ENCODE measurements at regions of chr10 and their contacts with region 1.

Region 1: DNA sequence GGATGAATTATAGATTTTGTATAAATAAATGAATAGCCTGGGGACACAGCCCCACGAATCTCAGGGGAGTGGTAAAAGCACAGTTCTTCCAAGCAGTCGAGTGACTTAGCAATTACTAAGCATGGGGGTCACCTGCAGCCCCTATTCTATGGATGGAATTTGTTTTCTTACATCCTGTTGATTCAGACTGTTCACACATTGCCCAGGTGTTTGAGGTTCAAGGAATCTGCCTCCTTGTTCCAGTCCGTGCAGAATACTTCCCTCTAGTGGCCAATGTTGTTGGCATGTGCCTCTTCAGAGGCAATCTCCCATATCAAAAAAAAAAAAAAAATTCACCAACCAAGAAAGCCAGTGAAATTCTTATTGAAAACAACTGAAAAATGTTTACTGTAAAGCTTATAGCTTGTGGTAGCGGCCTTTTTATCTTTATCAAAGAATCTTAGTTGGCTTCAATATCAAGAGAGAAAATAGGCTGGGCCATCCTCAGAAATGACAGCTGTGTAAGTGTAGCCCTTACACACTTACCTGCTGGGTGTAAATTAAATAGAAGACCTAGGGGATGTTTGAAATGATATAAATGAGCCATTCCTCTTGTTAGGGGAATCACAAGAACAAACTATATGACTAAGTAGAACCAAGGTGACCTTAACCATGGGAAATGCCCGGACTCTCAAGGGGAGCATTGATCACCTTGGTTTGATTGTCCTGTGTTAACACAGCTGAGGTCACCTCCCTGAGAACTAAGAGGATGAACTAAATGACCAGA is 7.8 kb downstream of the LIPM start:
- DNase-seq: peak; percentile 31 to 79
- ATAC-seq: peak; percentile 91 to 94
- H3K4me3 ChIP-seq: no peak overlapping the region
- H3K27ac ChIP-seq: no peak overlapping the region
- H3K4me1 ChIP-seq: peaks cover 9% of the 10 kb centered on the region; the same call in 2 of the 3 replicates
- CTCF ChIP-seq: peak; percentile 81
- EP300 ChIP-seq: no peak
- POLR2A ChIP-seq: no peak
- RAD21 ChIP-seq: peak; percentile 71 to 74

Region 2: GRCh38 chr10:88565072-88565471 is 245.3 kb before region 1 on chr10:
- CTCF ChIA-PET with region 1: interaction called, 20 read pairs
- POLR2A ChIA-PET with region 1: no interaction called
- DNase-seq: peak; percentile 15 to 39
- ATAC-seq: peak; percentile 81 to 89
- H3K4me3 ChIP-seq: no peak overlapping the region
- H3K27ac ChIP-seq: no peak overlapping the region
- H3K4me1 ChIP-seq: peaks cover 10% of the 10 kb centered on the region; the same call in 2 of the 3 replicates
- CTCF ChIP-seq: peak; percentile 64
- EP300 ChIP-seq: no peak
- POLR2A ChIP-seq: no peak
- RAD21 ChIP-seq: peak; percentile 82 to 85

Region 3: DNA sequence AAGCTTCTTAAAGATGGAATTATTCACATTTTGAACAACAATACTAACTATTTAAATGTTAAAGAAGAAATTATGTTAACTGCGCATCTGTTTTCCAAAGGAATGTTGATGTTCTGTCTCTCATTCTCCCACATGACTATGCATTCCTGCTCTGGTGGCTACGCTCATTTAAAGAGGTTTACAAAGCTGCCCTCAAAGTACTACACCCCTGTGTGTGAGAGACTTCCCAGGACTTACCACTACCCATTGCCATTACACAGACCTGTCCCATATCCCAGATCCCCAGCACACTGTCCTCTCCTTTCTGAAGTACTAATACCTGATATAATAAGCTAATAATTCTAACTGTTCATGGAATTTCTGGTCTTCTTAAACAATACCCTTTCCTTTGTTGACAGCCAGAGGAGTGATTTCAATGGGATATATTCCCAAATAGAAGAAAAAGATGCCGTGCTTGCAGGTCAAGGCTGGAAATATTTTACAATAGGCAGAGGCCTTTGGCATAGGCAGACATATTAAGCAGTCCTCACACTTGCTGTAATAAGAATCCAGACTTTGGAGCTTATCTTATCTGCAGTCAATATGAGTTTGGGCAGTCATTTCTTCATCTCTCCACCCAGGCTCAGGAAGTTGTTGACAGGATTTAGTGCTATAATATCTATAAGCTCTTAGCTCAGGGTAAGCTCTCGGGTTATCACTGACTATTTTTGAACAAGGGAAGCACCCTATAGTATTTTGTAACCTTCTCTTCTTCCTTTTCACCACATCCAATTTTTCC is 133.9 kb before region 1 on chr10:
- CTCF ChIA-PET with region 1: interaction called, 14 read pairs
- POLR2A ChIA-PET with region 1: no interaction called
- DNase-seq: no peak
- ATAC-seq: no peak
- H3K4me3 ChIP-seq: no peak overlapping the region
- H3K27ac ChIP-seq: no peak overlapping the region
- H3K4me1 ChIP-seq: no peaks in the 10 kb centered on the region
- CTCF ChIP-seq: no peak
- EP300 ChIP-seq: no peak
- POLR2A ChIP-seq: no peak
- RAD21 ChIP-seq: no peak

Region 4: GRCh38 chr10:88687853-88688467 is 122.4 kb before region 1 on chr10:
- CTCF ChIA-PET with region 1: interaction called, 45 read pairs
- POLR2A ChIA-PET with region 1: no interaction called
- DNase-seq: peak; percentile 27 to 36
- ATAC-seq: no peak
- H3K4me3 ChIP-seq: no peak overlapping the region
- H3K27ac ChIP-seq: peak overlapping the region in 1 of 2 experiments; percentile 37; a peak in 1 of 6 replicates
- H3K4me1 ChIP-seq: peaks cover 23% of the 10 kb centered on the region
- CTCF ChIP-seq: peak; percentile 86
- EP300 ChIP-seq: no peak
- POLR2A ChIP-seq: no peak
- RAD21 ChIP-seq: peak; percentile 79 to 82

Region 5: DNA sequence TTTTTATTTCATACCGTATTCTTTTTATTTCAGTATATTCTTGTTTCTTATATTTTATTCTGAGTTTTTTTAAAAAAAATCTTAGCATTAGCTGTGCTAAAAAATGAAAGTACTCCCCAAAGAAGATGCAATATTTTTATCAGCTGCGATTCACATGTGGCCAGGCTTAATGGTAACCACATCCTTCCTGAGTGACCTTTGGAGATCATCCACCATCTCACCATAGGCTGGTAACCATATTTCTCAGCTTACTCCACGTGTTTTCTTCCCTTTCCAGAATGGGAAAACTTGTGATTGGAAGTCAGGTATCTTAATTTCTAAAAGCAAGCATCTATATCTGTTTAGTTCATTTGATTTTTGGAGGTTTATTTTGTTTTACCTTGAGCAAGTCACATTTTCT is 26.7 kb before region 1 on chr10:
- CTCF ChIA-PET with region 1: interaction called, 15 read pairs
- POLR2A ChIA-PET with region 1: no interaction called
- DNase-seq: no peak
- ATAC-seq: no peak
- H3K4me3 ChIP-seq: no peak overlapping the region
- H3K27ac ChIP-seq: no peak overlapping the region
- H3K4me1 ChIP-seq: no peaks in the 10 kb centered on the region
- CTCF ChIP-seq: no peak
- EP300 ChIP-seq: no peak
- POLR2A ChIP-seq: no peak
- RAD21 ChIP-seq: no peak

Region 6: DNA sequence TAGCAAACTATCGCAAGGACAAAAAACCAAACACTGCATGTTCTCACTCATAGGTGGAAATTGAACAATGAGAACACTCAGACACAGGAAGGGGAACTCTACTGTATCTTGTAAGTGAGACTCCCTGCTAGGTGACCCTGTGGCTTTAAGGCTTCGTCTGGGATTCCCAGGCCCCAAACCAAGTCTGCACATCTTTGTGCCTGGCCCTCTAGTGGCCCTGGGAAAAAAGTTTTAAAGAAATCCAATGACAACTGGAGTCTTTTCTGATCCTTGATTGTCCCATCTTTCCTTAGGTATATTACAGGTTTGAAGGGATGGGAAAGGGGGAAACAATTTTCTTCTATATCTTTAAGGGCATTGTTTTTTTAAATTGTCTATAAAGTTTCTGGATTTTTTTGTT is 18.5 kb before region 1 on chr10:
- CTCF ChIA-PET with region 1: interaction called, 10 read pairs
- POLR2A ChIA-PET with region 1: no interaction called
- DNase-seq: peak; percentile 39 to 57
- ATAC-seq: peak; percentile 92 to 94
- H3K4me3 ChIP-seq: no peak overlapping the region
- H3K27ac ChIP-seq: no peak overlapping the region
- H3K4me1 ChIP-seq: peaks cover 22% of the 10 kb centered on the region
- CTCF ChIP-seq: peak; percentile 54
- EP300 ChIP-seq: no peak
- POLR2A ChIP-seq: no peak
- RAD21 ChIP-seq: peak; percentile 51 to 64

Measured in A549 (cell line).